IMR-90 (cell line): ENCODE measurements at regions of chr1 and their contacts with region 1.

Region 1: DNA sequence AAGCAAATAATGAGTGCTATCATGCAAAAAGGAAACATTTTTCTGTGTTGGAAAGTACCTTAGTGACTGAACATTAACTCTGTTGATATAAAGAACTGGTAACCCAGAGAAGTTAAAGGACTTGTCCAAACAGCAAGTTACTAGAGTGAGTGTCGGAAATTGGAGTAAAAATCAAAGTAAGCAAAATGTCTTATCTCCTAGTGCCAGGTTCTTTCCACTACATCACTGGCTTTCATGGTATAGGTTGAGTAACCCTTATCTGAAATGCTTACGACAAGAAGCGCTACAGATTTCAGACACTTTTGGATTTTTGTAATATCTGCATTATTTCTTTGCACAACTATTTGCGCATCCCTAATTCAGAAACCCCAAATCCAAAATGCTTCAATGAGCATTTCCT is 16.4 kb upstream of the RABIF start:
- DNase-seq: no peak
- ATAC-seq: no peak
- H3K4me3 ChIP-seq: no peak overlapping the region
- H3K27ac ChIP-seq: no peak overlapping the region
- H3K4me1 ChIP-seq: no peaks in the 10 kb centered on the region
- H3K27me3 ChIP-seq: no peaks in the 10 kb centered on the region
- CTCF ChIP-seq: no peak
- POLR2A ChIP-seq: no peak
- RAD21 ChIP-seq: no peak

Region 2: GRCh38 chr1:202522983-202523382 is 382.3 kb before region 1 on chr1:
- CTCF ChIA-PET with region 1: no interaction called
- POLR2A ChIA-PET with region 1: no interaction called
- dilution Hi-C with region 1: no loop called
- in situ Hi-C with region 1: no loop called
- intact Hi-C with region 1: no loop called
- DNase-seq: no peak
- ATAC-seq: no peak
- H3K4me3 ChIP-seq: no peak overlapping the region
- H3K27ac ChIP-seq: no peak overlapping the region
- H3K4me1 ChIP-seq: peaks cover 7% of the 10 kb centered on the region
- H3K27me3 ChIP-seq: no peaks in the 10 kb centered on the region
- CTCF ChIP-seq: no peak
- POLR2A ChIP-seq: no peak
- RAD21 ChIP-seq: no peak

Region 3: DNA sequence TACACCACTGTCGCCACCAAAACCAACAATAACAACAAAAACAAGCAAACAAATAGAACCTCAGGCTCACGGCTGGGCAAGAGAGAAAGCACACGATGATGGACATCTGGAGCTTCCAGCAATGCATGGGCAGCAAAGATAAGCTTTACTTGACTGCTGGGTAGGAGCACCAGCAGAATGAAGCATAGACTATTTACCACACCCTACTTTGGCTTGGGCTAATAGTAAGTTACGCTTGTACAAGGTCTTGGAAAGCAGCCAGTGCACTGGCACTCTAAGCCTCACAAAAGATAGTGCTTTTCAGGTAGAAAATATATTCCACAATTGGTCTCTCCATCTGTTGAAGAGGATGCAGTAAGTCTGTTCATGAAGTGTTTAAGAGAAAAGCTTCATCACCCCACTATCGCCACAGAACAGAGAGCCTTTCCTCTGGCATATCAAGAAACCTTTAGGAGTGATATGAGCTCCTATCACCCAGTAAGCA is 39.1 kb after region 1 on chr1:
- CTCF ChIA-PET with region 1: no interaction called
- POLR2A ChIA-PET with region 1: no interaction called
- dilution Hi-C with region 1: no loop called
- in situ Hi-C with region 1: no loop called
- intact Hi-C with region 1: loop called (anchors 5 kb)
- DNase-seq: no peak
- ATAC-seq: no peak
- H3K4me3 ChIP-seq: no peak overlapping the region
- H3K27ac ChIP-seq: no peak overlapping the region
- H3K4me1 ChIP-seq: no peaks in the 10 kb centered on the region
- H3K27me3 ChIP-seq: no peaks in the 10 kb centered on the region
- CTCF ChIP-seq: no peak
- POLR2A ChIP-seq: no peak
- RAD21 ChIP-seq: no peak

Region 4: DNA sequence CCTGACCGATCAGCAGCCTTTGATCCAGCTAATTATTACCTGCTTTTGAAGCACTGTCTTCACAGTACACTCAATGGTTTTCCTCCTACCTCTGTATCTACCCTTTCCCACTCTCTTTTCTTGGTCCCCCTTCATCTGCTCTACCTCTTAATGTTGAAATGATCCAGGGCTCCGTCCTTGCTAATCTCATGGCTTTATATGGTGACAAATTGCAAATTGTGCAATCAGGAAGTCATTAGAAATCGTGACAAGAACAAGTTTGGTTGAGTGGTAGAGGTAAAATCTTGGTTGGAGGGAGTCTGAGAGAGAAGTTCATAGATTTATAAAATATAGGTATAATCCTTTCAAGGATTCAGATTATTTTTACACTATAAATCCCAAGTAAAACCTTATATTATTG is 71.3 kb after region 1 on chr1:
- CTCF ChIA-PET with region 1: no interaction called
- POLR2A ChIA-PET with region 1: no interaction called
- dilution Hi-C with region 1: no loop called
- in situ Hi-C with region 1: no loop called
- intact Hi-C with region 1: loop called (anchors 2 kb)
- DNase-seq: no peak
- ATAC-seq: no peak
- H3K4me3 ChIP-seq: no peak overlapping the region
- H3K27ac ChIP-seq: no peak overlapping the region
- H3K4me1 ChIP-seq: no peaks in the 10 kb centered on the region
- H3K27me3 ChIP-seq: peaks cover 47% of the 10 kb centered on the region
- CTCF ChIP-seq: no peak
- POLR2A ChIP-seq: no peak
- RAD21 ChIP-seq: no peak